ENCODE measurements at regions of chr19 and their contacts with region 1.

Region 1: DNA sequence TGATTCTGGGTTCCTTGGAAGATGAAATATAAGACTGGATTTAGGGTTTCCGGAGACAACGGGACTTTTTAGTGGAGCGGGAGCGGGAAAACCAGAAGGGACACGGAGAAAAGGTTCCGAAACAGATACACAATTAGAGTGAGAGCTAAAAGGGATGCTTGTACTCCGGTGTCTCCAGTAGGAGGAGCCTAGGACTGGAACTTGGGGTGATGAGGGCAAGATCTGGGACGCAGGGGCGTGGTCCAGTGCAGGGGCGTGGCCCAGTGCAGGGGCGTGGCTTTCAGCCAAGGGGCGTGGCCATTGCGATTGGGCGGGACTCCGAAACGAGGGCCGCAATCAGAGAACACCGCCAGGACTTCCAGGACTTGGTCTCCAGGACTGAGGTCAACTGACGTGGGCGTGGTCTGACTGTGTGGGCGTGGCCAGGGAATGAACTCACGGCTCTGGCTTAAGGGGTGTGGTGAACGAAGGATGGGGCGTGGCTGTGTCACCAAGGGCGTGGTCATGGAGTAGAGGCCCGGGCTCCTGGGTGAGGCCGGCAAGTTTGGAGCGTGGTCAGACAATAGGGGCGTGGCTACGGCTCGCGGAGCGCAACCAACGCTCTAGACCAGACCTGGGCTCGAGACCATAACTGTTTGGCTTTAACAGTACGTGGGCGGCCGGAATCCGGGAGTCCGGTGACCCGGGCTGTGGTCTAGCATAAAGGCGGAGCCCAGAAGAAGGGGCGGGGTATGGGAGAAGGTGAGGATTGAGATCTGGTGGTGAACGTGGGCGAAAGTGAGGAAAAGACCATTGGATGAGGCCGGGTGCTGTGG is at the start of gene DKKL1:
- DNase-seq: peak; percentile 26 to 77 (median 62)
- ATAC-seq: peak; percentile 81
- H3K4me3 ChIP-seq: peak within 1 kb of the TSS in 1 of 2 experiments; percentile 31
- H3K4me3 Mint-ChIP-seq: no peak within 1 kb of the TSS
- H3K27ac ChIP-seq: no peak within 1 kb of the TSS
- H3K27ac Mint-ChIP-seq: no peak within 1 kb of the TSS
- H3K4me1 ChIP-seq: peaks cover 42% of the 10 kb centered on the region
- H3K4me1 Mint-ChIP-seq: peaks cover 6% of the 10 kb centered on the region
- H3K27me3 ChIP-seq: peaks cover 7 to 39% of the 10 kb centered on the region in 2 experiments
- H3K27me3 Mint-ChIP-seq: peaks cover 31% of the 10 kb centered on the region
- CTCF ChIP-seq: no peak
- total RNA-seq, gene DKKL1: not detected

Region 2: DNA sequence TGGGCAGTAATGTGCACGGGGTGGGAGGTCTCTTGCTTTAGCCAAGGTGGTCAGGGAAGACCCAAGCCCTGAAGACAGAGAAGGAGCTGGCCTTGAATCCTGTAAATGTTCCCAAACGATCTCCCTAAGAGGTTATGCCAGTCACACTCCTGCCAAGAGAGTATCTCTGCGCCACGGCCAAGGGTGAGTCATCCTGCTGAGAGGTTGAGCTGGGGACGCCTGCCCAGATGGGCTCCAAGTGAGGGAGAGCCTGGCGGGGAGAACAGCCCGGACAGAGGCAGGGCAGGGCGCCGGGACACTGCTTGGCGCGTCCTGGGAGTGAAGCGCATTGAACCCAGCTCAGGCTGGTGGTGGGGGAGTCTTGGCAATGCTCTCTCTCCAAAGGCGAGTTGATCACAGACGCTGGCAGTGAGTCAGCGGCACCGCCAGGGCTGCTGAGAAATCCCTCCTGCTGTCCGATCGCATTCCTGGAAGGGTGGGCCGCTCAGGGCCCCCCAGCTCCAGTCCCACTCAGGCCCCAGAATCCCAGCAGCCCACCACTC is 795.1 kb before region 1 on chr19:
- CTCF ChIA-PET with region 1: no interaction called
- POLR2A ChIA-PET with region 1: no interaction called
- intact Hi-C with region 1: no loop called
- DNase-seq: no peak
- ATAC-seq: no peak
- H3K4me3 ChIP-seq: no peak overlapping the region
- H3K4me3 Mint-ChIP-seq: no peak overlapping the region
- H3K27ac ChIP-seq: no peak overlapping the region
- H3K27ac Mint-ChIP-seq: no peak overlapping the region
- H3K4me1 ChIP-seq: no peaks in the 10 kb centered on the region
- H3K4me1 Mint-ChIP-seq: no peaks in the 10 kb centered on the region
- H3K27me3 ChIP-seq: no peaks in the 10 kb centered on the region
- H3K27me3 Mint-ChIP-seq: peaks cover 8% of the 10 kb centered on the region
- CTCF ChIP-seq: no peak

Region 3: GRCh38 chr19:49333811-49334288 is 29.6 kb before region 1 on chr19:
- CTCF ChIA-PET with region 1: interaction called, 3 read pairs
- POLR2A ChIA-PET with region 1: no interaction called
- intact Hi-C with region 1: loop called (anchors 1 to 2 kb)
- DNase-seq: peak; percentile 33 to 90 (median 73)
- ATAC-seq: peak; percentile 59
- H3K4me3 ChIP-seq: peak overlapping the region; percentile 20 to 50
- H3K4me3 Mint-ChIP-seq: peak overlapping the region; percentile 77
- H3K27ac ChIP-seq: peak overlapping the region; percentile 46 to 89
- H3K27ac Mint-ChIP-seq: peak overlapping the region; percentile 99
- H3K4me1 ChIP-seq: peaks cover 68% of the 10 kb centered on the region
- H3K4me1 Mint-ChIP-seq: peaks cover 76% of the 10 kb centered on the region
- H3K27me3 ChIP-seq: no peaks in the 10 kb centered on the region
- H3K27me3 Mint-ChIP-seq: no peaks in the 10 kb centered on the region
- CTCF ChIP-seq: no peak

Measured in CD8-positive, alpha-beta T cell (primary cell).